ENCODE measurements at regions of chr14 and their contacts with region 1.

Region 1: GRCh38 chr14:102591889-102592763 is at the start of gene RCOR1:
- DNase-seq: peak; percentile 97
- ATAC-seq: peak; percentile 86
- H3K4me3 Mint-ChIP-seq: peak within 1 kb of the TSS; percentile 96
- H3K27ac Mint-ChIP-seq: peak within 1 kb of the TSS; percentile 98
- H3K4me1 Mint-ChIP-seq: peaks cover 17% of the 10 kb centered on the region
- H3K27me3 Mint-ChIP-seq: peaks cover 8% of the 10 kb centered on the region
- total RNA-seq, gene RCOR1: 21.7 to 24.3 TPM

Region 2: GRCh38 chr14:102524466-102525218 is 67.5 kb before region 1 on chr14:
- POLR2A ChIA-PET with region 1: interaction called, 19 read pairs
- DNase-seq: peak; percentile 100
- ATAC-seq: peak; percentile 99
- H3K4me3 Mint-ChIP-seq: peak overlapping the region; percentile 92
- H3K27ac Mint-ChIP-seq: peak overlapping the region; percentile 89
- H3K4me1 Mint-ChIP-seq: peaks cover 21% of the 10 kb centered on the region
- H3K27me3 Mint-ChIP-seq: no peaks in the 10 kb centered on the region

Region 3: GRCh38 chr14:102662636-102663430 is 70.7 kb after region 1 on chr14:
- POLR2A ChIA-PET with region 1: no interaction called
- DNase-seq: no peak
- ATAC-seq: no peak
- H3K4me3 Mint-ChIP-seq: no peak overlapping the region
- H3K27ac Mint-ChIP-seq: no peak overlapping the region
- H3K4me1 Mint-ChIP-seq: peaks cover 1% of the 10 kb centered on the region
- H3K27me3 Mint-ChIP-seq: no peaks in the 10 kb centered on the region

Measured in activated naive CD8-positive, alpha-beta T cell treated with anti-CD3 and anti-CD28 coated beads, Interleukin-2, amount 10 ng/mL, durations not matched to agents 7 days and 5 days (primary cell).